ENCODE measurements at regions of chr2 and their contacts with region 1.

Region 1: DNA sequence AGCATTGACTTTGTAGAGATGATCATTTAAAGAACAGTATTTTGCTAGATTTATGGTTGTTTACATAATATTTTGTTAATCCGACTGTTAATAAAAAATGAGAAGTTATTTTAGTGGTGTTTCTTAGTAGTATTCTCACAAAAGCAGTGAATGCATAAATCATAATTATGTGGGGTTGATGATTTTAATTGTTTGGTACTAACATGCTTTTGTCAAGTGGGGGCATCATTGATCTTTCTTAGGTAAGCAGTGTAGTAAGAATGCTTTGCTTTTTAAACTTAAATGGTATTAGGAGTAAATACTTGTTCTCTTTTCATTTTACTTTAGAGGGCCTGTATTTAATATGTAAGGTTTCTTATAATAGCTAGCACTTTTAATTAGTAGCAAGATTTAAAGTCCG is 109.2 kb upstream of the OTX1 start:
- DNase-seq: no peak
- H3K4me3 ChIP-seq: no peak overlapping the region
- H3K27ac ChIP-seq: no peak overlapping the region
- H3K4me1 ChIP-seq: peaks cover 2% of the 10 kb centered on the region
- H3K27me3 ChIP-seq: no peaks in the 10 kb centered on the region
- CTCF ChIP-seq: no peak

Region 2: DNA sequence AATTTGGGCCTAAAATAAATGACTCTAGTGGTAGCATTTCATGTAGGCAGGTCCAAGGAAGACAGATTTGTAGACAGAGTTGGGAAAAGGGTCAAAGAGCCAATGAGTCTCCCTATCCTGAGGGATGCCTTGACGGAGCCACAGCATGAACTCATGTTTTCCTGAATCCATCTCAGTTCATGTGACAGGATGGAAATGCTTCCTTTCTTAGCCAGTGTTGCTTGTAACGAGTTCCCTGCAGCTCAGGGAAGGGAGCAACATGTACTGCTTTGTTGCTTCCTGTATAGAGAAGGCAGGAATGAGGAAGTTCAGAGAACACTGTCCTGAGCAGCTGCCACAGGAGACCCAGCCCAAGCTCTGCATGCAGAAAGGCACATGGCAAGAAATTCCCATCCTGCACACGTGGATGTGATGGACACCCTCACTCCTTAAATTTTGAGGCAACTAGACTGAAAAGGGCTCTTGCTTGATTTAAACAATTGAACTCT is 463.3 kb before region 1 on chr2:
- CTCF ChIA-PET with region 1: no interaction called
- POLR2A ChIA-PET with region 1: interaction called, 17 read pairs
- intact Hi-C with region 1: no loop called
- DNase-seq: peak; percentile 18 to 40
- H3K4me3 ChIP-seq: no peak overlapping the region
- H3K27ac ChIP-seq: no peak overlapping the region
- H3K4me1 ChIP-seq: no peaks in the 10 kb centered on the region
- H3K27me3 ChIP-seq: no peaks in the 10 kb centered on the region
- CTCF ChIP-seq: no peak

Region 3: GRCh38 chr2:62586981-62587380 is 354.4 kb before region 1 on chr2:
- CTCF ChIA-PET with region 1: no interaction called
- POLR2A ChIA-PET with region 1: no interaction called
- intact Hi-C with region 1: no loop called
- DNase-seq: no peak
- H3K4me3 ChIP-seq: no peak overlapping the region
- H3K27ac ChIP-seq: no peak overlapping the region
- H3K4me1 ChIP-seq: no peaks in the 10 kb centered on the region
- H3K27me3 ChIP-seq: no peaks in the 10 kb centered on the region
- CTCF ChIP-seq: no peak